ENCODE measurements at regions of chr5 and their contacts with region 1.

Region 1: GRCh38 chr5:133111299-133111698 is 59.5 kb downstream of the HSPA4 start:
- DNase-seq: peak; percentile 62 to 84 (median 76)
- ATAC-seq: peak; percentile 81
- H3K4me3 ChIP-seq: no peak overlapping the region
- H3K4me3 Mint-ChIP-seq: peak overlapping the region in 5 of 10 donors; percentile 22 to 60 (median 51)
- H3K27ac ChIP-seq: no peak overlapping the region
- H3K27ac Mint-ChIP-seq: peak overlapping the region in 5 of 9 donors; percentile 3 to 85 (median 15)
- H3K4me1 ChIP-seq: peaks cover 0 to 10% of the 10 kb centered on the region in 2 donors
- H3K4me1 Mint-ChIP-seq: peaks cover 17 to 33% (median 26%) of the 10 kb centered on the region in 7 donors
- H3K27me3 ChIP-seq: no peaks in the 10 kb centered on the region
- H3K27me3 Mint-ChIP-seq: peaks cover 0 to 6% (median 0%) of the 10 kb centered on the region in 5 donors

Region 2: DNA sequence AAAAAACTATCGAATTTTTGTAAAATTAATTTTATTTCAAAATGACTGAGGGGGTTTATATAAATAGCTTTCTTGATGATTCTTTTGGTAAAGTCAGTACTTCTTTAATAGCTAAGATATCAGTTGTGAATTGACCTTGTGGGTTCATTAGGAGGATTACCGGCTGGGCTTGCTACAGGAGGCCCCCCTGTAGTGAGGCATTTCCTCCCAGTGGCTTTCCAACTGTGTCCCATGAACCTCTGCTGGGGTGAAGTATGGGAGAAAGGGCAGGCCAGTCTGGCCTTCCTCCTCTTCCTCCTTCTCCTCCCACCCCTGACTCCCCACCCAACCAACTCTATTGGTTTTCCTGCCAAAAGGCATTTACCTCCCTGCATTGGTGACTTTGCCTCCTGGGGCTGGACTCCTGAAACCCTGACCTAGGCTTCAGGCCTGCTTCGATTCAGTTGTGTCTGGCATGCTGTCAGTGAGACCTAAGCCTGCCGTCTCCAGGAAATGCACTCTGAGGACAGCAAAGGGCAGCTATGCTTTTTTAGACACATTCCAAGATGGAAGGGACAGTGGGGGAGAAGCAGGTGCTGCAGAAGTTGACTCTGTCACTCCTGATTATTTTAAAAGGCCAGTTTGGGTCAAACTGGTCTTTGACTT is 85.3 kb after region 1 on chr5:
- CTCF ChIA-PET with region 1: interaction called, 7 read pairs
- POLR2A ChIA-PET with region 1: no interaction called
- intact Hi-C with region 1: loop called (anchors 1 kb)
- DNase-seq: no peak
- ATAC-seq: no peak
- H3K4me3 ChIP-seq: no peak overlapping the region
- H3K4me3 Mint-ChIP-seq: no peak overlapping the region
- H3K27ac ChIP-seq: no peak overlapping the region
- H3K27ac Mint-ChIP-seq: peak overlapping the region in 1 of 9 donors; percentile 25
- H3K4me1 ChIP-seq: no peaks in the 10 kb centered on the region
- H3K4me1 Mint-ChIP-seq: no peaks in the 10 kb centered on the region
- H3K27me3 ChIP-seq: no peaks in the 10 kb centered on the region
- H3K27me3 Mint-ChIP-seq: peaks cover 0 to 12% (median 0%) of the 10 kb centered on the region in 5 donors

Region 3: GRCh38 chr5:133247881-133248624 is 136.8 kb after region 1 on chr5:
- CTCF ChIA-PET with region 1: interaction called, 6 read pairs
- POLR2A ChIA-PET with region 1: no interaction called
- intact Hi-C with region 1: loop called in 1 of 2 experiments (anchors 1 kb)
- DNase-seq: no peak
- ATAC-seq: peak; percentile 38
- H3K4me3 ChIP-seq: no peak overlapping the region
- H3K4me3 Mint-ChIP-seq: no peak overlapping the region
- H3K27ac ChIP-seq: no peak overlapping the region
- H3K27ac Mint-ChIP-seq: no peak overlapping the region
- H3K4me1 ChIP-seq: peaks cover 0 to 9% of the 10 kb centered on the region in 2 donors
- H3K4me1 Mint-ChIP-seq: peaks cover 0 to 27% (median 13%) of the 10 kb centered on the region in 7 donors
- H3K27me3 ChIP-seq: no peaks in the 10 kb centered on the region
- H3K27me3 Mint-ChIP-seq: peaks cover 0 to 2% (median 0%) of the 10 kb centered on the region in 5 donors

Region 4: GRCh38 chr5:133347039-133347438 is 235.7 kb after region 1 on chr5:
- CTCF ChIA-PET with region 1: no interaction called
- POLR2A ChIA-PET with region 1: no interaction called
- intact Hi-C with region 1: loop called in 1 of 2 experiments (anchors 1 kb)
- DNase-seq: peak in 1 of 9 donors; percentile 8
- ATAC-seq: no peak
- H3K4me3 ChIP-seq: no peak overlapping the region
- H3K4me3 Mint-ChIP-seq: no peak overlapping the region
- H3K27ac ChIP-seq: no peak overlapping the region
- H3K27ac Mint-ChIP-seq: no peak overlapping the region
- H3K4me1 ChIP-seq: no peaks in the 10 kb centered on the region
- H3K4me1 Mint-ChIP-seq: no peaks in the 10 kb centered on the region
- H3K27me3 ChIP-seq: no peaks in the 10 kb centered on the region
- H3K27me3 Mint-ChIP-seq: peaks cover 5 to 30% (median 7%) of the 10 kb centered on the region in 5 donors

Region 5: GRCh38 chr5:133423618-133424282 is 312.5 kb after region 1 on chr5:
- CTCF ChIA-PET with region 1: no interaction called
- POLR2A ChIA-PET with region 1: no interaction called
- intact Hi-C with region 1: loop called (anchors 1 to 5 kb)
- DNase-seq: peak; percentile 17 to 73 (median 52)
- ATAC-seq: peak; percentile 83
- H3K4me3 ChIP-seq: no peak overlapping the region
- H3K4me3 Mint-ChIP-seq: no peak overlapping the region
- H3K27ac ChIP-seq: no peak overlapping the region
- H3K27ac Mint-ChIP-seq: peak overlapping the region in 1 of 9 donors; percentile 77
- H3K4me1 ChIP-seq: no peaks in the 10 kb centered on the region
- H3K4me1 Mint-ChIP-seq: peaks cover 0 to 10% (median 5%) of the 10 kb centered on the region in 7 donors
- H3K27me3 ChIP-seq: no peaks in the 10 kb centered on the region
- H3K27me3 Mint-ChIP-seq: peaks cover 6 to 16% (median 14%) of the 10 kb centered on the region in 5 donors

Region 6: DNA sequence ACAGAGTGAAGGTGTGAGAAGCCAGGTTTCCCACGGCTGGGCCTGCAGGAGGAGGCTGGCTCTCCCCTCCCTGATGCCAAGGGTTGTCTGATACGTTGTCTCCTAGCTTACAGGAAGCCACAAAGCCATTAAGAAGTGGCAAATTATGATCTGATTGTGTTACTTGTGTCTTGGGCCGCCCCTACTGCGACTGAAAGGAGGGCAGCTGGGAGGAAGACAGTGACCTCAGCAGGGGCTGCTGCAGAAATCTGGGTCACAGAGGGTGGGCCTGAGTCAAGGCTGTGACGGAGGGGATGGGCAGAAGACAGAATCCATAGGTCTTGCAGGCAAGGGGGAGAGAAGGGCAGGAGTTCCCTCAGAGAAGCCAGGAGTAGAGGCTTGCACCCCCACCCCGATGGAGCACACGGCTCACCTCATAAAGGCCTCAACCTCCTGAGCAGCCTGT is 356.1 kb after region 1 on chr5:
- CTCF ChIA-PET with region 1: no interaction called
- POLR2A ChIA-PET with region 1: no interaction called
- intact Hi-C with region 1: no loop called
- DNase-seq: no peak
- ATAC-seq: peak; percentile 62
- H3K4me3 ChIP-seq: no peak overlapping the region
- H3K4me3 Mint-ChIP-seq: no peak overlapping the region
- H3K27ac ChIP-seq: no peak overlapping the region
- H3K27ac Mint-ChIP-seq: no peak overlapping the region
- H3K4me1 ChIP-seq: peaks cover 0 to 16% of the 10 kb centered on the region in 2 donors
- H3K4me1 Mint-ChIP-seq: peaks cover 0 to 17% (median 4%) of the 10 kb centered on the region in 7 donors
- H3K27me3 ChIP-seq: no peaks in the 10 kb centered on the region
- H3K27me3 Mint-ChIP-seq: peaks cover 5 to 21% (median 10%) of the 10 kb centered on the region in 5 donors

Region 7: GRCh38 chr5:133610489-133611356 is 499.4 kb after region 1 on chr5:
- CTCF ChIA-PET with region 1: no interaction called
- POLR2A ChIA-PET with region 1: no interaction called
- intact Hi-C with region 1: loop called in 1 of 2 experiments (anchors 10 kb)
- DNase-seq: peak in 5 of 9 donors; percentile 8 to 48 (median 16)
- ATAC-seq: peak; percentile 58
- H3K4me3 ChIP-seq: peak overlapping the region; percentile 50
- H3K4me3 Mint-ChIP-seq: peak overlapping the region; percentile 49 to 87 (median 72)
- H3K27ac ChIP-seq: no peak overlapping the region
- H3K27ac Mint-ChIP-seq: no peak overlapping the region
- H3K4me1 ChIP-seq: no peaks in the 10 kb centered on the region
- H3K4me1 Mint-ChIP-seq: peaks cover 0 to 21% (median 6%) of the 10 kb centered on the region in 7 donors
- H3K27me3 ChIP-seq: peaks cover 7 to 13% of the 10 kb centered on the region in 2 donors
- H3K27me3 Mint-ChIP-seq: peaks cover 58 to 75% (median 63%) of the 10 kb centered on the region in 5 donors

Region 8: DNA sequence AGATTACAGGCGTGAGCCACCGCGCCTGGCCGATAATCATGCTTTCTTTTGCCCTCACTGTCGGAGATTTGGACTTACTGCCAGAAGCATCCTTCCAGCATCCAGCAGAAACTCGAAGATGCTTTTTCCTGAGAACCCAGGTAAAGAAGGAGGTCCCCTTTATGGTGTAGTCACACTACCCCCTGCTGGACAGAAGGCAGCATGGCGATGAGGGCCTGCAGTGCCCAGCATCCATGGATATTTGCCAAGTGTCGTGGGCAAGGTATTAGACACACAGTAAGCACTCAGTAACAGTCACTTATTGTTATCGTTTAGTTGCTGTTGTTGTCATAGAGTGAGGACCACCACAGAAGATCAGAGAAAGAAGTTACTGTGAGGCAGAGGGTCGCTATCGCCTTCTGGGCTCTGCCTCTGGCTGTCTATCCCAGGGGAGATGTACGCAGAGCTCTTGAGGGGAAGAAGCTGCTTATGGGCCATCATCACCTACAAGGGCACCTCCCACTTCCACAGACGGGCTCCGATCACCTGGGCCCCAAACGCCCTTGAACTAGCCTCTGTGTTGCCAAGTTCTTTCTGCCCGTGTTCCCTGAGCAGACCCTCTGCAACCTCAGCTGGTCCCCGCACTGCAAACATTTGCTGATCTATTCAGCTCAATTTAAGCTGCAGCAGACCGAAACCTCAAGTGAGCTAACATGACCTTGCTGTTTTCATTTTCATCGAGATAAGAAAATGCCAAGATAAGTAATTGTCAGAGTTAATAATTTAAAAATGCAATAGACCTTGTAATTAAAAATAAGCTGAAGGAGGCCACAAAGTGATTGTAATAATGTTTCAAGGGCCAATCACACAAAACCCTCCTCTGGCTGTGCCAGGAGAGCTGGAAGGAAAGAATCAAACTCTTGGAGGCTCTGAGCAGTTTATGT is 833.2 kb after region 1 on chr5:
- CTCF ChIA-PET with region 1: no interaction called
- POLR2A ChIA-PET with region 1: no interaction called
- intact Hi-C with region 1: loop called in 1 of 2 experiments (anchors 5 kb)
- DNase-seq: peak in 4 of 9 donors; percentile 14 to 42 (median 18)
- ATAC-seq: peak; percentile 52
- H3K4me3 ChIP-seq: no peak overlapping the region
- H3K4me3 Mint-ChIP-seq: no peak overlapping the region
- H3K27ac ChIP-seq: no peak overlapping the region
- H3K27ac Mint-ChIP-seq: no peak overlapping the region
- H3K4me1 ChIP-seq: no peaks in the 10 kb centered on the region
- H3K4me1 Mint-ChIP-seq: peaks cover 0 to 8% (median 0%) of the 10 kb centered on the region in 7 donors
- H3K27me3 ChIP-seq: no peaks in the 10 kb centered on the region
- H3K27me3 Mint-ChIP-seq: peaks cover 0 to 9% (median 0%) of the 10 kb centered on the region in 5 donors

Measured in naive thymus-derived CD4-positive, alpha-beta T cell (primary cell).